Natural killer cell (primary cell): ENCODE measurements at regions of chr10 and their contacts with region 1.

Region 1: DNA sequence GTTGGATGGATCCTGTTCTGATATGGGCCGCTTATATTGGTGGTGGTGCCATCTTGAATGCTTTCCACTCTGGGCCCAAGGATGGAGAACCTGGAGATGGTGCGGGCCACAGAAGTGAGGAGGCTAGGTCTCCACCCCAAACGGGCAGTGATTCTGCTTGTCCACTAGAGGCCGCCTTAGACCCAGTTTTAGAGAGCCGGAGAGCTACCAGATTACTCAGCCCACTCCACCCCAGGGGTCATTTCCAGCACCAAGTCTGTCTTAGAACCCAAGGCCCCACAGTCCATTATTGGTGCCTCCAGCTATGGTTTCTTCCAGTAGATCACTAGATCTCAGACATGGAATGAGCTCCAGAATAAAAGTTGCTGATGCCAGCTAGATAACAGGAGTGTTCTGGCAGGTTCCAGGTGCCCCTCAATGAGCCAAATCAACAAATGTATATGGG is 11.8 kb upstream of the CAMK2G start:
- DNase-seq: peak; percentile 65 to 85
- ATAC-seq: peak; percentile 91 to 99 (median 99)
- H3K4me3 ChIP-seq: no peak overlapping the region
- H3K4me3 Mint-ChIP-seq: no peak overlapping the region
- H3K27ac ChIP-seq: no peak overlapping the region
- H3K27ac Mint-ChIP-seq: no peak overlapping the region
- H3K4me1 ChIP-seq: peaks cover 6% of the 10 kb centered on the region
- H3K4me1 Mint-ChIP-seq: peaks cover 7 to 11% of the 10 kb centered on the region in 2 donors
- H3K27me3 ChIP-seq: no peaks in the 10 kb centered on the region
- H3K27me3 Mint-ChIP-seq: no peaks in the 10 kb centered on the region
- CTCF ChIP-seq: peak; percentile 87

Region 2: DNA sequence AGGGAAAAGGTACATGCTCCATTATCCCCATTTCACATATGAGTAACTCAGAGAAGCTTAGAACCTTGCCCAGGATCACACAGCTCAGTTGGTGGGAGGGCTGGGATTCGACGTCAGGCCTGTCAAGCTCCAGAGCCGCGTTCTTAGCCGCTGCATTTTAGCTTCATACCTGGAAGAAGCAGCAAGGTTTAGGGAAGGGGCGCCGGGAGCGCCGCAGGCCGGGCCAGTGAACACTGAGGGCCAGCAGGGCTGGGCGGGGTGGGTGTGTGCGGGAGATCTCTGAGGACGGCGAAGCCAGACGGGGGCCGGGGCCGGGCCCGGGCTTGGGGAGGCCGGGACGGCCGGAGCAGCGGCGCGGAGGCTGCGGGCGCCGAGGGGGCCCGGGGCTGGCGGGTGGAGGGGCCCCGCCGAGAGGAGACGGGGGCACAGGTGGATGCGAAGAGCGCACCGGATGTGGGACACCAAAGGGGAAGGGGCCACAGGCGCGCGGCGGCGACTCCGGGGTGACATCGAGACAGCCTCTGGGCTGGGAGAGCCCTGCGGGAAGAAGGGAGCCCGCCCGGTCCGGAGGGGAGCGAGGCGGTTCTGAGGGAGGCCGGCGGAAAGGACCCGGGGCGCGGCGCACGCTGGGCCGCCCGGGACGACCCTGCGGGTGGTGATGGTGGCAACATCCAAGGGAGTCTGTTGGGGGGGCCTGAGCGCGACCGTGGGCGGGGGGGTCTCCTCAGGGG is 75.2 kb before region 1 on chr10:
- intact Hi-C with region 1: no loop called
- DNase-seq: peak in 1 of 2 donors; percentile 76
- ATAC-seq: peak; percentile 14 to 24 (median 22)
- H3K4me3 ChIP-seq: peak overlapping the region; percentile 57
- H3K4me3 Mint-ChIP-seq: peak overlapping the region; percentile 89
- H3K27ac ChIP-seq: peak overlapping the region; percentile 72
- H3K27ac Mint-ChIP-seq: peak overlapping the region; percentile 81 to 82
- H3K4me1 ChIP-seq: peaks cover 31% of the 10 kb centered on the region
- H3K4me1 Mint-ChIP-seq: peaks cover 31 to 34% of the 10 kb centered on the region in 2 donors
- H3K27me3 ChIP-seq: no peaks in the 10 kb centered on the region
- H3K27me3 Mint-ChIP-seq: no peaks in the 10 kb centered on the region
- CTCF ChIP-seq: no peak

Region 3: GRCh38 chr10:73940634-73941221 is 54.6 kb after region 1 on chr10:
- intact Hi-C with region 1: loop called (anchors 1 kb)
- DNase-seq: peak; percentile 83 to 85
- ATAC-seq: peak; percentile 98 to 100 (median 100)
- H3K4me3 ChIP-seq: no peak overlapping the region
- H3K4me3 Mint-ChIP-seq: peak overlapping the region; percentile 78
- H3K27ac ChIP-seq: no peak overlapping the region
- H3K27ac Mint-ChIP-seq: peak overlapping the region in 1 of 2 donors; percentile 73
- H3K4me1 ChIP-seq: peaks cover 10% of the 10 kb centered on the region
- H3K4me1 Mint-ChIP-seq: peaks cover 8 to 9% of the 10 kb centered on the region in 2 donors
- H3K27me3 ChIP-seq: no peaks in the 10 kb centered on the region
- H3K27me3 Mint-ChIP-seq: no peaks in the 10 kb centered on the region
- CTCF ChIP-seq: peak; percentile 94

Region 4: GRCh38 chr10:74081192-74081803 is 195.2 kb after region 1 on chr10:
- intact Hi-C with region 1: loop called (anchors 1 kb)
- DNase-seq: peak in 1 of 2 donors; percentile 72
- ATAC-seq: peak in 2 of 3 donors; percentile 49 to 60
- H3K4me3 ChIP-seq: no peak overlapping the region
- H3K4me3 Mint-ChIP-seq: no peak overlapping the region
- H3K27ac ChIP-seq: no peak overlapping the region
- H3K27ac Mint-ChIP-seq: peak overlapping the region; percentile 24 to 71
- H3K4me1 ChIP-seq: peaks cover 9% of the 10 kb centered on the region
- H3K4me1 Mint-ChIP-seq: peaks cover 55 to 65% of the 10 kb centered on the region in 2 donors
- H3K27me3 ChIP-seq: no peaks in the 10 kb centered on the region
- H3K27me3 Mint-ChIP-seq: no peaks in the 10 kb centered on the region
- CTCF ChIP-seq: peak; percentile 47

Region 5: DNA sequence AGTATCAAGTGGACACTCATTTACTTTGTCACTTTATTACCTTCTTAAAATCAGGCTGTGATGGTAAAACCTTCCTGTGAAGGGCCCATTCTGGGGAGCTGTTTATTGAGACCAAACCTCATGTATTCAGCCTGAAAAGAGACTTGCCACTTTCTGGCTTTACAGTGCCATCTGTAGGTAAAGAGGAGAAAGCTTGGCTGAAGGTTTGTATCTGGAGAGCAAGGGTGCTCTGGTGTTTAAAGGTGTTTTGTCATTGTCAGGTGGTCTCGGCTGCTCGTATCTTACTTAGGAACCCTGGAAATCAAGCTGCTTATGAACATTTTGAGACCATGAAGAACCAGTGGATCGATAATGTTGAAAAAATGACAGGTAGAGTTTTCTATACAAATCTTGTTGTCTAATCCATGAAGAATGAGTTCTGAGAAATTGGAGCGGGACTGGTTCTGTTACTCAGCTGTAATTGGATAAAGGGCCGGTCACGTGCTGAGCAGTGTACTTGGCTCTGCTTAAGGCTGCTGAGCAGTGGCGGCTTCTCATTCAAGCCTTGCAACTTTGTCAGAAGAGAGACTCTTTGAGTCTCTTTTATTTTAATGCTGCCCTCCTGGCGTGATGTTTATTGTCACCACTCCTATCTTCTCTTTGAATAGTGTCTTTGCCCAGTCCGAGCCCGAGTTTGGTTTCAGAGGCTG is 217.6 kb after region 1 on chr10:
- intact Hi-C with region 1: loop called (anchors 5 kb)
- DNase-seq: peak in 1 of 2 donors; percentile 26
- ATAC-seq: no peak
- H3K4me3 ChIP-seq: no peak overlapping the region
- H3K4me3 Mint-ChIP-seq: no peak overlapping the region
- H3K27ac ChIP-seq: no peak overlapping the region
- H3K27ac Mint-ChIP-seq: peak overlapping the region; percentile 6 to 38
- H3K4me1 ChIP-seq: no peaks in the 10 kb centered on the region
- H3K4me1 Mint-ChIP-seq: peaks cover 7 to 14% of the 10 kb centered on the region in 2 donors
- H3K27me3 ChIP-seq: no peaks in the 10 kb centered on the region
- H3K27me3 Mint-ChIP-seq: no peaks in the 10 kb centered on the region
- CTCF ChIP-seq: no peak